IMR-90 (cell line): ENCODE measurements at regions of chr4 and their contacts with region 1.

Region 1: DNA sequence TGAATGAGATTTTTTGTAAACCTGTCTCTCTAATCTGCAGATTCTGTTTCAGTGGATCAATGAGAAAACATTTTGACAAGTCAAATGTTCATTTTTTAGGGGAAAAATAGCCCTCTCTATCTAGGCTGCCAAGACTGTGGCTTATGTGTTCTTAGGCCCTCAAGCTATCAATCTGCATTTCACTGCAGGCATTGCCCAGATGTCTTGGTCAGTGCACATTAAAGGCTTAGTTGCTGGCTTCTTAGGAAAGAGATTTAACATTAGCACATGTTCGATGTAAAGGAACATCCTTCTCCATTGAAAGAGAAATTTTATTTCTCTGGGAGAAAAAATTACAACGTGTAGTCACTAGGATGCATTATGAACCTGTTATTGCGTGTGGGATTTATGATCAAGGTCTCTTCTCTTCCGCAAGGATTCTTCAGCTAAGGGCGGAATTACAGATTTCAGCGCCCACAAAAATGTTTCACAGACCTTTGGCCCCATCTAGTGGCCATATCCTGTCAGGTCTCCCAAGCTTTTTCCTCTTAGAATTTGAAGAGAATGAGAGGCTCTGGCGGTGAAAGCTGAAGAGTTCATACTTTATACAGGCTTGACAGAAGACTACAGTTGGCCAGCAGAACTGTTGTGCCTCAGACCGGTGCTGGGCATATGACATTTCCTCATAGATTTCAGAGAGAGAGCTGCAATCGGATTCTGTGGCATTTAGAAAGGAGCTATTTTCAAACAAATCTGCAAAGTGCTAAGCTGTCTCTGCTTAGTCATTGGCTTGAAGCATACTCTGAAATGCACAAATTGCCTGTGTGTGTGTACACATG is 144.6 kb upstream of the NOCT start:
- DNase-seq: peak; percentile 78
- ATAC-seq: peak; percentile 63
- H3K4me3 ChIP-seq: no peak overlapping the region
- H3K27ac ChIP-seq: no peak overlapping the region
- H3K4me1 ChIP-seq: peaks cover 14% of the 10 kb centered on the region
- H3K27me3 ChIP-seq: peaks cover 6% of the 10 kb centered on the region; the same call in 1 of the 2 replicates
- CTCF ChIP-seq: peak; percentile 87
- POLR2A ChIP-seq: no peak
- RAD21 ChIP-seq: peak; percentile 88

Region 2: GRCh38 chr4:138035781-138036258 is 835.1 kb before region 1 on chr4:
- CTCF ChIA-PET with region 1: interaction called, 7 read pairs
- POLR2A ChIA-PET with region 1: interaction called, 24 read pairs
- dilution Hi-C with region 1: no loop called
- in situ Hi-C with region 1: loop called (anchors 5 kb)
- intact Hi-C with region 1: loop called (anchors 2 kb)
- DNase-seq: peak; percentile 81
- ATAC-seq: peak; percentile 83
- H3K4me3 ChIP-seq: no peak overlapping the region
- H3K27ac ChIP-seq: peak overlapping the region; percentile 64
- H3K4me1 ChIP-seq: peaks cover 22% of the 10 kb centered on the region
- H3K27me3 ChIP-seq: no peaks in the 10 kb centered on the region
- CTCF ChIP-seq: peak; percentile 81
- POLR2A ChIP-seq: no peak
- RAD21 ChIP-seq: peak; percentile 89

Region 3: GRCh38 chr4:138182838-138183426 is 688.0 kb before region 1 on chr4:
- CTCF ChIA-PET with region 1: interaction called, 5 read pairs
- POLR2A ChIA-PET with region 1: no interaction called
- dilution Hi-C with region 1: no loop called
- in situ Hi-C with region 1: no loop called
- intact Hi-C with region 1: loop called (anchors 5 kb)
- DNase-seq: peak; percentile 72
- ATAC-seq: peak; percentile 31; the same call in 1 of the 2 replicates
- H3K4me3 ChIP-seq: no peak overlapping the region
- H3K27ac ChIP-seq: no peak overlapping the region
- H3K4me1 ChIP-seq: peaks cover 4% of the 10 kb centered on the region; the same call in 1 of the 2 replicates
- H3K27me3 ChIP-seq: no peaks in the 10 kb centered on the region
- CTCF ChIP-seq: peak; percentile 76
- POLR2A ChIP-seq: no peak
- RAD21 ChIP-seq: peak; percentile 76

Region 4: DNA sequence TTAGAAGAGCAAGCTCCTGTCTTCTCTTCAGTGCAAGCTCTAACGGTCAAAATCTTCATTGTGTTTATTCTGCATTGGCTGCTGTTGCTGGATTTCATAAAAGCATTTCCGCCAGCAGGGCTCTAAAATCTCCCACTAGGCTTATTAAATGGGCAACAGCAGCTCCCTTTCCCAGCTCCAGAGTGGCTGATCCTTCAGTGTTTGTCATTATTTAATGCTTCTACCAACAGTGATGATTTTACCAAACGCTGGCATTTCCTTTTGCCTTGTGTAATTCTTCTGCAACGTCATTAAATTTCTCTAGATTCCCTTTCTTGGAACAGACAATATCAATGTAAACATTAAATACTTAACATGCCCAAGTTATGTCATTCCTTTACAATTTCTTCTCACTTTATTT is 648.9 kb before region 1 on chr4:
- CTCF ChIA-PET with region 1: no interaction called
- POLR2A ChIA-PET with region 1: no interaction called
- dilution Hi-C with region 1: no loop called
- in situ Hi-C with region 1: loop called (anchors 25 kb)
- intact Hi-C with region 1: loop called (anchors 10 kb)
- DNase-seq: peak; percentile 93
- ATAC-seq: peak; percentile 89
- H3K4me3 ChIP-seq: no peak overlapping the region
- H3K27ac ChIP-seq: peak overlapping the region; percentile 35
- H3K4me1 ChIP-seq: peaks cover 12% of the 10 kb centered on the region
- H3K27me3 ChIP-seq: no peaks in the 10 kb centered on the region
- CTCF ChIP-seq: 0 out of 2 replicates have a peak, but pooled peaks have one; percentile 9
- POLR2A ChIP-seq: peak; percentile 58
- RAD21 ChIP-seq: peak; percentile 28; the same call in 1 of the 2 replicates

Region 5: GRCh38 chr4:138555584-138555983 is 315.4 kb before region 1 on chr4:
- CTCF ChIA-PET with region 1: no interaction called
- POLR2A ChIA-PET with region 1: no interaction called
- dilution Hi-C with region 1: no loop called
- in situ Hi-C with region 1: no loop called
- intact Hi-C with region 1: no loop called
- DNase-seq: no peak
- ATAC-seq: no peak
- H3K4me3 ChIP-seq: no peak overlapping the region
- H3K27ac ChIP-seq: no peak overlapping the region
- H3K4me1 ChIP-seq: no peaks in the 10 kb centered on the region
- H3K27me3 ChIP-seq: no peaks in the 10 kb centered on the region
- CTCF ChIP-seq: no peak
- POLR2A ChIP-seq: no peak
- RAD21 ChIP-seq: no peak

Region 6: GRCh38 chr4:138576684-138577083 is 294.3 kb before region 1 on chr4:
- CTCF ChIA-PET with region 1: interaction called, 6 read pairs
- POLR2A ChIA-PET with region 1: no interaction called
- dilution Hi-C with region 1: no loop called
- in situ Hi-C with region 1: no loop called
- intact Hi-C with region 1: loop called (anchors 2 kb)
- DNase-seq: peak; percentile 68
- ATAC-seq: peak; percentile 82
- H3K4me3 ChIP-seq: no peak overlapping the region
- H3K27ac ChIP-seq: no peak overlapping the region
- H3K4me1 ChIP-seq: no peaks in the 10 kb centered on the region
- H3K27me3 ChIP-seq: no peaks in the 10 kb centered on the region
- CTCF ChIP-seq: peak; percentile 55
- POLR2A ChIP-seq: no peak
- RAD21 ChIP-seq: peak; percentile 82

Region 7: GRCh38 chr4:138688408-138689085 is 182.4 kb before region 1 on chr4:
- CTCF ChIA-PET with region 1: interaction called, 6 read pairs
- POLR2A ChIA-PET with region 1: interaction called, 24 read pairs
- dilution Hi-C with region 1: no loop called
- in situ Hi-C with region 1: no loop called
- intact Hi-C with region 1: loop called (anchors 2 kb)
- DNase-seq: peak; percentile 23
- ATAC-seq: peak; percentile 18
- H3K4me3 ChIP-seq: no peak overlapping the region
- H3K27ac ChIP-seq: peak overlapping the region; percentile 72; the same call in 1 of the 2 replicates
- H3K4me1 ChIP-seq: peaks cover 28% of the 10 kb centered on the region
- H3K27me3 ChIP-seq: no peaks in the 10 kb centered on the region
- CTCF ChIP-seq: no peak
- POLR2A ChIP-seq: no peak
- RAD21 ChIP-seq: no peak

Region 8: GRCh38 chr4:138938366-138938690 is 67.4 kb after region 1 on chr4:
- CTCF ChIA-PET with region 1: interaction called, 4 read pairs
- POLR2A ChIA-PET with region 1: no interaction called
- dilution Hi-C with region 1: no loop called
- in situ Hi-C with region 1: no loop called
- intact Hi-C with region 1: loop called (anchors 1 kb)
- DNase-seq: peak; percentile 65
- ATAC-seq: peak; percentile 96
- H3K4me3 ChIP-seq: no peak overlapping the region
- H3K27ac ChIP-seq: no peak overlapping the region
- H3K4me1 ChIP-seq: no peaks in the 10 kb centered on the region
- H3K27me3 ChIP-seq: no peaks in the 10 kb centered on the region
- CTCF ChIP-seq: peak; percentile 61
- POLR2A ChIP-seq: no peak
- RAD21 ChIP-seq: peak; percentile 81

Region 9: GRCh38 chr4:139202991-139203390 is 332.0 kb after region 1 on chr4:
- CTCF ChIA-PET with region 1: no interaction called
- POLR2A ChIA-PET with region 1: no interaction called
- dilution Hi-C with region 1: no loop called
- in situ Hi-C with region 1: no loop called
- intact Hi-C with region 1: no loop called
- DNase-seq: no peak
- ATAC-seq: no peak
- H3K4me3 ChIP-seq: no peak overlapping the region
- H3K27ac ChIP-seq: no peak overlapping the region
- H3K4me1 ChIP-seq: 0 out of 2 replicates have a peak, but pooled peaks cover 2% of the 10 kb centered on the region
- H3K27me3 ChIP-seq: no peaks in the 10 kb centered on the region
- CTCF ChIP-seq: no peak
- POLR2A ChIP-seq: no peak
- RAD21 ChIP-seq: no peak